Activated T-helper 2 cell treated with anti-CD3 and anti-CD28 coated beads, Interferon-gamma antibody, Interleukin-2, Interleukin-4, amounts not matched to agents 10 μg/mL and 5 μg/mL and 100 μg/mL, durations not matched to agents 14 hours and 24 hours and 36 hours (primary cell): ENCODE measurements at regions of chr3 and their contacts with region 1.

Region 1: GRCh38 chr3:59313365-59313764 is 263.5 kb upstream of the CFAP20DC start:
- DNase-seq: peak; percentile 15
- H3K4me3 Mint-ChIP-seq: no peak overlapping the region
- H3K27ac Mint-ChIP-seq: no peak overlapping the region
- H3K4me1 Mint-ChIP-seq: peaks cover 8% of the 10 kb centered on the region
- H3K27me3 Mint-ChIP-seq: peaks cover 3% of the 10 kb centered on the region

Region 2: DNA sequence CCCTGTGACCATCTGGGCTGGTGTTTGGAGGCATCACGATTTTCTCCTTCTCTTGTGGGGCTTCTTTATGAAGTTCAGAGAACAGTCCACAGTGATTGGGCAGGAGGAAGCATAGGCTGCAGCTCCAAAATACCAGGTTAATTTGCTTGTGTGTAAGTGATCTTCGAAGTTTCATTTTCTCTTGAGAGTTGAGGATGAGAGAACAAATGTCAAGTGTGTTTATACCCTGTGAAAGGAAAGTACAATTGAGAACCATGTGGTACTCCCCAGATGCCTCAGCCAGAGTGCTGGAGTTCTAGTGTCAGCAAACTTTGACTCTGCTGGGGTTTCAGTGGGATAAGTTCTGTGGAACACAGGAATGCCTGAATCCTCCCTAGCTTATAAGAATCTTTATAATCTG is 93.6 kb after region 1 on chr3:
- intact Hi-C with region 1: no loop called
- DNase-seq: no peak
- H3K4me3 Mint-ChIP-seq: no peak overlapping the region
- H3K27ac Mint-ChIP-seq: no peak overlapping the region
- H3K4me1 Mint-ChIP-seq: peaks cover 15% of the 10 kb centered on the region
- H3K27me3 Mint-ChIP-seq: peaks cover 1% of the 10 kb centered on the region

Region 3: DNA sequence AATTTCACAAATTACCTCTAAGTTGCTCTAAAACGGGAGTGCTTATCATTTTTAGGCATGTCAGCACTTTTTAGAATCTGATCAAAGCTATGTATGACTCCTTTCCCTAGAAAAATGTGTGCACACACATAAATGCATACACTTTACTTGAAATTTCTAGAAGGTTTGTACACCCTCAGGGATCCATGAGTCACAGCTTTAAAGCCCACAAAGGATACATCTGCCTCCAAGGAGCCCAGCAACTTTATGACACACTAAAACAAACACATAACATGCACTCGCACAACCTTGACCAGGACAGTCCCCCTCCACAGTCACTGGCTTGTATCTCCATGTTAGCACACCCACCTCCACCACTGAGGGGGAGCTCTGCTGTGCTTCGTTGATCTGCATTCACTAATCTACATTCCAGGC is 458.4 kb after region 1 on chr3:
- intact Hi-C with region 1: no loop called
- DNase-seq: no peak
- H3K4me3 Mint-ChIP-seq: no peak overlapping the region
- H3K27ac Mint-ChIP-seq: no peak overlapping the region
- H3K4me1 Mint-ChIP-seq: peaks cover 50% of the 10 kb centered on the region
- H3K27me3 Mint-ChIP-seq: no peaks in the 10 kb centered on the region

Region 4: GRCh38 chr3:59809710-59810444 is 496.5 kb after region 1 on chr3:
- intact Hi-C with region 1: loop called (anchors 10 kb)
- DNase-seq: no peak
- H3K4me3 Mint-ChIP-seq: no peak overlapping the region
- H3K27ac Mint-ChIP-seq: no peak overlapping the region
- H3K4me1 Mint-ChIP-seq: peaks cover 7% of the 10 kb centered on the region
- H3K27me3 Mint-ChIP-seq: no peaks in the 10 kb centered on the region